ENCODE measurements at regions of chr21 and their contacts with region 1.

Region 1: DNA sequence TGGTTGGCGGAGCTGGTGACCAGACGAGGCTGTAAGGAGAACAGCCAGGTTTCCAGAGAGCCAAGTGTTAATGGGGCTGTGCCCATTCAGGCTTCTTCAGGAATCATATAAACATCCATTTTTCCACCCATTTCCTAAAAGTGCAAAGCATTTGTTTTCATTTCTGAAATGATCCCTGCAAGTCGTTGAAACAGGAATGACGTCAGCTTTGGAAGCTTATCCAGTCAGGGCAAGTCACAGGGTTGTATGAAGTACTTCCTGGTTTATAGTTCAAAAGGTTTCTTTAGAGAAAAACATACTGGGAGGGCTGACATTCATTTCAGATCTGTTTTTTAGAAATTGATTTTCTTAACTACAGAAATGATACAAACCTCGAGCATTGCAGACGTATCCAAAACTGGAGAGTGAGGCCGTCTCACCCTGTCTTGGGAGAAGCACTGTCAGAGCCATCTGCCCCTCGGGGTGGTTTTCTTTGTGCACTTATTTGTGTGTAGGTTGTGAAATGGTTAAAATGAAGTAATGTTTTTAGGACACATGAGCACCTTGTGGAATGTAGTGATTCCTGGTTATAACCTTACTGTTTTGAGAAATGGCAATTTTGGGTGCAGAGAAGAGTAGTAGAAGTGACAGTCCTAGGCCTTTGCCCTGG is 29.4 kb downstream of the IGSF5 start:
- DNase-seq: no peak
- ATAC-seq: no peak
- H3K4me3 ChIP-seq: no peak overlapping the region
- H3K27ac ChIP-seq: no peak overlapping the region
- H3K4me1 ChIP-seq: no peaks in the 10 kb centered on the region
- H3K27me3 ChIP-seq: no peaks in the 10 kb centered on the region
- CTCF ChIP-seq: no peak
- POLR2A ChIP-seq: no peak

Region 2: DNA sequence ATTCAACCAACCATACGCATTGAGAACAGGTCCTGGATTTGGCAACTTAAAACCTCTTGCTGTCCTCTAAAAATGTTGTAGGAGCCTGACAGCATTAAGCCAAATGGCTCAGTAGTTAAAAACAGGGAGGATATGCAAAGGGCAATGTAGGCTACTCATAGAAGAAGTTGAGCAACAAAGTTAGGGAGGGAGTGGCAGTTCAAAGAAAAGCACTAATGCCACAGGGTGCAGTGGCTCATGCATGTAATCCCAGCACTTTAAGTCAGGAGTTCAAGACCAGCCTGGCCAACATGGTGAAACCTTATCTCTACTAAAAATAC is 1183.2 kb before region 1 on chr21:
- in situ Hi-C with region 1: no loop called
- intact Hi-C with region 1: no loop called
- DNase-seq: no peak
- ATAC-seq: no peak
- H3K4me3 ChIP-seq: no peak overlapping the region
- H3K27ac ChIP-seq: no peak overlapping the region
- H3K4me1 ChIP-seq: no peaks in the 10 kb centered on the region
- H3K27me3 ChIP-seq: no peaks in the 10 kb centered on the region
- CTCF ChIP-seq: no peak
- POLR2A ChIP-seq: no peak

Region 3: DNA sequence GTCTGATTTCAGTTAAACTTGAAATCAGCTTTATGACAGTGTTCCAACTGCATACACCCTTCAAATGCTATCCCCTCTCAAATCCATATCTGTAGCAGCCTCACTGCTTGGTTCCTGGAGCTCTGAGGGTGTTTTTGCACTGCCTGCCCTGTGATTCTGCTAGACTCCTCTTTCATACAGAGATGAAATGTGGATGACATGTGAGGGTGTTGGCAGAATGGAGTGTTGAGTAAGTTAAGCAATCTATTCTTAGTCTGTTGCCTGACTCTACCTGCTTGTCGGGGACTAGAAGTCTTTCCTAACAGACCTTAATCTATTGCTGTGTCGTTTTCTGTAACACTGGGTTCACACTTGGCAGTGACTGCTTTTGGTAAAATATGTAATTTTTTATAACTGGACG is 19.5 kb before region 1 on chr21:
- in situ Hi-C with region 1: no loop called
- intact Hi-C with region 1: loop called (anchors 1 kb)
- DNase-seq: no peak
- ATAC-seq: no peak
- H3K4me3 ChIP-seq: no peak overlapping the region
- H3K27ac ChIP-seq: no peak overlapping the region
- H3K4me1 ChIP-seq: no peaks in the 10 kb centered on the region
- H3K27me3 ChIP-seq: no peaks in the 10 kb centered on the region
- CTCF ChIP-seq: no peak
- POLR2A ChIP-seq: no peak